ENCODE measurements at regions of chr1 and their contacts with region 1.

Region 1: DNA sequence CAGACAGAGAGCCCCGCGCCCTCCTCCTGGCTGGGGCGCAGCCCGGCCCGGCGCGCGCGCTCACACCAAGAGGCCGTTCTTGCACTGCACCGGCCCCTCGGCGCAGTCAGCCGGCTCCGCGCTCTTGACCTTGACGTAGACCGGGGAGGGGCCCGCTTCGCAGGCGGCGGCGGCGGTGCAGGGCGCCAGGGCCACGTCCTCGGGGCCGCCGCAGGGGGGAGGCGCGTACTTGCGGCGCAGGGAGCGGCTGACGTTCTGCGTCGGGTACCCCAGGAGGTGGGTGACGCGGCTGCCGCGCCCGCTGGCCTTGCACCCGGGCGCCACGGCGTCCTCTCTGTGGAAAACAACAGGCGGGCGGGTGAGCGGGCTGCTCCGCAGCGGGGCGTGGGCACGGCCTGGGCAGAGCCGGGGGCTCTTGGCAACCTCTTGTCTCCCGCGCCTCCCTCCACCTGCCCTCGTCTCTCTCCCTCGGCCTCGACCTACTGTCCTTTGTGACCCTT is 7.7 kb downstream of the VSIG8 start:
- DNase-seq: peak; percentile 70 to 88
- H3K4me3 ChIP-seq: peak overlapping the region; percentile 85
- H3K27ac ChIP-seq: peak overlapping the region; percentile 66
- H3K4me1 ChIP-seq: peaks cover 17% of the 10 kb centered on the region
- H3K27me3 ChIP-seq: no peaks in the 10 kb centered on the region
- CTCF ChIP-seq: no peak

Region 2: DNA sequence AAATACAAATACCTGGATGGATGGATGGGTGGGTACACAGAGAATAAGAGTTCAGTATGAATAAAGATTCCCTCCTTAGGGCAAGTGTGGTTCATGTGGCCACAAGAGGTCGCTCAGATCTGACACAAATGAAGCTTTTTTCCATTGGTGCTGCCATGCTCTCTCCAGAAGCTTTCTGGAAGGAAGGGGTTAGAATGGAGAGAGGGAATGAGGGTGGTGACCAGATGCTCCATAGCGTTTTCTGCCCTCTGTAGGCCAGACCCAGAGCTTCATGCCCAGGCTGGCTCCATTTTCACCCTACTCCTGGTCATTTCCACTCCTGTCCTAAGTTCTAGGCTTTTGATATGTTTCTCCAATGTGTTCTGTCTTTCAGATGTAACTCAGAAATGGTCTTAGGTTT is 55.9 kb before region 1 on chr1:
- CTCF ChIA-PET with region 1: no interaction called
- POLR2A ChIA-PET with region 1: no interaction called
- intact Hi-C with region 1: no loop called
- DNase-seq: peak; percentile 61 to 70
- H3K4me3 ChIP-seq: no peak overlapping the region
- H3K27ac ChIP-seq: no peak overlapping the region
- H3K4me1 ChIP-seq: no peaks in the 10 kb centered on the region
- H3K27me3 ChIP-seq: peaks cover 19% of the 10 kb centered on the region
- CTCF ChIP-seq: peak; percentile 74

Region 3: GRCh38 chr1:159869173-159869572 is 14.4 kb after region 1 on chr1:
- CTCF ChIA-PET with region 1: interaction called, 4 read pairs
- POLR2A ChIA-PET with region 1: interaction called, 4 read pairs
- intact Hi-C with region 1: loop called (anchors 1 kb)
- DNase-seq: peak; percentile 54 to 55
- H3K4me3 ChIP-seq: no peak overlapping the region
- H3K27ac ChIP-seq: no peak overlapping the region
- H3K4me1 ChIP-seq: peaks cover 17% of the 10 kb centered on the region
- H3K27me3 ChIP-seq: no peaks in the 10 kb centered on the region
- CTCF ChIP-seq: no peak

Region 4: DNA sequence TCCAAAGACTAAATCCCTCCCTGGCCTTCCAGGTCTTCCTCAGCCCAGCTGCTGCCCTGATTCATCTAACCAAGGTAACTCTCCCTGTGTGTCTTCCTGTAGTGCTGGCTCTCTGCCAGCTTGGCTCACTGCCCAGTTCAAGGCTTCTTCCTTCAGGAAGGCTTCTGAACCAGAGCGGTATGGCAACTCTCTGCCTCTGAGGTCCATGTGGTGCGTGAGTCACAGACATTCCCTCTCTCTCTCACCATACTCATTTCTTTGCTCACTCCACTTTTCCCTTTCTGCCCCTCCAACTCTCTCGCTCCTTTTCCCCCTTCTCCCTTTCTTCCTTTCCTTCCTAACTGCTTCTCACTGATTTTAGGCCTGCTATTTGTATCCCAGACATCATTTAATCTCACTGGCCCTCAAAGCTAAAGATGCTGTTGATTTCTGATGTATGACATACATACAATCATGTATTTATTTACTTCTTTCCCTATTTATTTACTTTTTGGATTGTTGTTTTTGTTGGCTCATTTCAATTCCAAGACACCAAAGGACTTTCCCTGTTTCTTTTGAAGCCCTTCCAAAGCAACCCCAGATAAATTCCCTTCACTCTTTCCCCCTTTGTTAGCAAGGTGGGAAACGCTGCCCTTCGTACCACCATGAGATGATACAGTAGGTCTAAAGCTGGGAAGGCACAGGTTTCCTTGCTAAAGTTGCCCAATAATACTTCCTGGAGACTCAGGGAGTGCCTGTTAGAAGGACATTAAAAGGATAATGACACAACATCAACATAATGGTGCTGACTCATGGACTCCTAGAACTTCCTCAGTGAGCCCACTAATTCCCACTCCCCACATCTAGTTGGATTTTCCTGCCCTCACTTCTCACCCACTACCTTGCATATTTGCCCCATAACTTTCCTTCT is 27.4 kb after region 1 on chr1:
- CTCF ChIA-PET with region 1: no interaction called
- POLR2A ChIA-PET with region 1: interaction called, 3 read pairs
- intact Hi-C with region 1: loop called (anchors 2 kb)
- DNase-seq: peak; percentile 97 to 98
- H3K4me3 ChIP-seq: peak overlapping the region; percentile 19; the same call in 1 of the 2 replicates
- H3K27ac ChIP-seq: peak overlapping the region; percentile 98
- H3K4me1 ChIP-seq: peaks cover 57% of the 10 kb centered on the region
- H3K27me3 ChIP-seq: no peaks in the 10 kb centered on the region
- CTCF ChIP-seq: no peak

Region 5: DNA sequence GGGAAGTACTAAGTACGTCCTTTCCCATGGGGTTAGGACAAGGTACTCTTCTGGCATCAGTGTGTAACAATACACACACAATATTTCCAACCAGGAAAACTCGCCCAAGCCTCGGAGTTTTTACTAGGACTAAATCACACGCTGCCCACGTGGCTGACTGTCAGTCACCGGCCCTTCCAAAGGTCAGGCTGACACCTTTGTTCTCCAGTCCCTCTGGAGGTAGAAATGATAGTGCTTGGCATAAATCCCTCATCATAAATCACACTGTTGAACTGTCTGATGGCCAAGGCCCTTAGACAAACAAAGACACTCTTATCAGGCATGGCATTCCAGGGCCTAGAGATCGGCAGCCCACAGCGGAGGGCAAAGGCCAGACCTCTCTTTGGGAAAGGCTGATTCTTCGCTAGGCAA is 116.2 kb after region 1 on chr1:
- CTCF ChIA-PET with region 1: no interaction called
- POLR2A ChIA-PET with region 1: no interaction called
- intact Hi-C with region 1: no loop called
- DNase-seq: no peak
- H3K4me3 ChIP-seq: no peak overlapping the region
- H3K27ac ChIP-seq: no peak overlapping the region
- H3K4me1 ChIP-seq: no peaks in the 10 kb centered on the region
- H3K27me3 ChIP-seq: peaks cover 15% of the 10 kb centered on the region
- CTCF ChIP-seq: no peak

Region 6: DNA sequence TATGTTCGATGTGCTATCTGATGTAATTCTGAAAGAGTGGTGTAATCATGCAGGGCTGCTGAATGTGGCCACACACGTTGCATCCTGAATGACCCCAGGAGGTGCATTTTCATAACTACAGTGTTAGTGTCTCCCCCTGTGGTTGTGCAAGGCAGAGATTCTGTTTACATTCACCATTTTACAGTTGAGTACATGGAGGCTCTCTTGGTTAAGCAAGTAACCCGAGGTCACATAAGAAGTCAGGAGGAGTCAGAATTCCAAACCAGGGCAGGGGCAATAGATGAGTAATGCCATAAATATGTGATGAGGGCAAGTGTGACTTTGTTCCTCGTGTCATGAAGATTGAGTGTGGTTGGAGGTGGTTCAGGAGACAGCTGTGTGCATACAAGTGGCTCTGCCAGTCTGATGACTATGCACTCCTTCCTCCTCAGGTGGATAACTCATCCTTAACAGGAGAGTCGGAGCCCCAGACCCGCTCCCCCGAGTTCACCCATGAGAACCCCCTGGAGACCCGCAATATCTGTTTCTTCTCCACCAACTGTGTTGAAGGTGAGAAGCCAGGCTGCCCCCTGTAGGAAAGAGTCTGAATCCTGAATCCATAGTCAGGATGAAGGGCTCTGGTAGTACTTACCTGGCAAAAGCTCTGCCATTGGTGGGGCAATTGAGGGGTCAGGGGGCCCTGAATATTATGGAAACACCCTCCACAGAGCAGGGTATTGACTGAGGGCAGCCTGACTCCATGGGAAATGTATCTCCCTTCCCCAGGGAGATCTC is 270.1 kb after region 1 on chr1:
- CTCF ChIA-PET with region 1: no interaction called
- POLR2A ChIA-PET with region 1: interaction called, 11 read pairs
- intact Hi-C with region 1: no loop called
- DNase-seq: peak; percentile 79 to 100
- H3K4me3 ChIP-seq: peak overlapping the region; percentile 8; the same call in 1 of the 2 replicates
- H3K27ac ChIP-seq: peak overlapping the region; percentile 89
- H3K4me1 ChIP-seq: peaks cover 48% of the 10 kb centered on the region
- H3K27me3 ChIP-seq: no peaks in the 10 kb centered on the region
- CTCF ChIP-seq: peak; percentile 52; the same call in 1 of the 2 replicates